Activated T-helper 1 cell treated with anti-CD3 and anti-CD28 coated beads, Interleukin-12 subunit alpha, Interleukin-12 subunit beta, Interleukin-2, Interleukin-4 antibody, amounts not matched to agents 30 ng/mL and 10 ng/mL and 1 ng/mL, durations not matched to agents 14 hours and 24 hours and 36 hours (primary cell): ENCODE measurements at regions of chr11 and their contacts with region 1.

Region 1: DNA sequence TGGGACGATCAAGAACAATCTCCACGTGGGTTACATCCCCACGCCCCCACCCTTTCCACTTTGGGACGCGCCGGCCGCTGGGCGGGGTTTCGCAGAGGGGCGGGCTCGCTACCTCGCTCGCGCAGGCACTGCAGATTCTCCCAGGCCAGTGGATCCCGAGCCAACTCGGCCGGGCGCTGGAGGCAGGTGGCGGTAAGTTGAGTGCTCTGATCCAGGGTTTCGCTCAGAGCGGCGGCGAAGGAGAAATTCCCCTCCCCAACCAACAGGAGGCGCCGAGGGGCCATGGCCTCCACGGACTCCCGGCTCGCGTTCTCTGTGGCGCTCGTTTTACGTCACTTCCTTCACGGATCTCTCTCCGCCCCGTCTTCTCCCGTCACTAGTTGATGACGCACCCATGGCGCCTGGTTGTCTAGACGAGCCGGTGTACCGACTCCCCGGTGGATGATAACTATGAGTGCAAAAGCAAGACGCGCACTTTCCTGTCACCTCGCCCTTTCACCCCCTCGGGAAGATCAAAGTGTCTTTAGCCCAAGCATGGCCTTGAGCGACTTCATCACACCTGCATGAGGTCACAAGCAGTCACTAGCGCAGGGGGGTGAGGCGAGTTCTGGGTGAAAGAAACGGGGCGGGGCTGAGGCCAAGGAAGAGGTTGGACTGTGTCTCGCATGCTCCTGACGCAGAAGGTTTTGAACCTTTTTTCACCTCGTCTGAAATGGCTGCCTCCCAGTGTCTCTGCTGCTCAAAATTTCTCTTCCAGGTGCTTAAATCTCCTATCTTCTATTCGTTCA is at the starts of genes CFAP68 and FDXACB1:
- DNase-seq: peak; percentile 92
- H3K4me3 Mint-ChIP-seq: peak within 1 kb of the TSS; percentile 94
- H3K27ac Mint-ChIP-seq: peak within 1 kb of the TSS; percentile 100
- H3K4me1 Mint-ChIP-seq: peaks cover 26% of the 10 kb centered on the region
- H3K27me3 Mint-ChIP-seq: peaks cover 2% of the 10 kb centered on the region
- total RNA-seq, gene CFAP68: 17.7 and 22.3 TPM in 2 replicates
- total RNA-seq, gene FDXACB1: 7.9 and 9.4 TPM in 2 replicates

Region 2: GRCh38 chr11:111932611-111932950 is 53.5 kb after region 1 on chr11:
- intact Hi-C with region 1: loop called (anchors 1 kb)
- DNase-seq: no peak
- H3K4me3 Mint-ChIP-seq: no peak overlapping the region
- H3K27ac Mint-ChIP-seq: peak overlapping the region; percentile 24
- H3K4me1 Mint-ChIP-seq: peaks cover 34% of the 10 kb centered on the region
- H3K27me3 Mint-ChIP-seq: peaks cover 2% of the 10 kb centered on the region

Region 3: GRCh38 chr11:111982019-111982464 is 103.0 kb after region 1 on chr11:
- intact Hi-C with region 1: loop called (anchors 1 kb)
- DNase-seq: peak; percentile 34
- H3K4me3 Mint-ChIP-seq: no peak overlapping the region
- H3K27ac Mint-ChIP-seq: no peak overlapping the region
- H3K4me1 Mint-ChIP-seq: peaks cover 9% of the 10 kb centered on the region
- H3K27me3 Mint-ChIP-seq: peaks cover 6% of the 10 kb centered on the region

Region 4: DNA sequence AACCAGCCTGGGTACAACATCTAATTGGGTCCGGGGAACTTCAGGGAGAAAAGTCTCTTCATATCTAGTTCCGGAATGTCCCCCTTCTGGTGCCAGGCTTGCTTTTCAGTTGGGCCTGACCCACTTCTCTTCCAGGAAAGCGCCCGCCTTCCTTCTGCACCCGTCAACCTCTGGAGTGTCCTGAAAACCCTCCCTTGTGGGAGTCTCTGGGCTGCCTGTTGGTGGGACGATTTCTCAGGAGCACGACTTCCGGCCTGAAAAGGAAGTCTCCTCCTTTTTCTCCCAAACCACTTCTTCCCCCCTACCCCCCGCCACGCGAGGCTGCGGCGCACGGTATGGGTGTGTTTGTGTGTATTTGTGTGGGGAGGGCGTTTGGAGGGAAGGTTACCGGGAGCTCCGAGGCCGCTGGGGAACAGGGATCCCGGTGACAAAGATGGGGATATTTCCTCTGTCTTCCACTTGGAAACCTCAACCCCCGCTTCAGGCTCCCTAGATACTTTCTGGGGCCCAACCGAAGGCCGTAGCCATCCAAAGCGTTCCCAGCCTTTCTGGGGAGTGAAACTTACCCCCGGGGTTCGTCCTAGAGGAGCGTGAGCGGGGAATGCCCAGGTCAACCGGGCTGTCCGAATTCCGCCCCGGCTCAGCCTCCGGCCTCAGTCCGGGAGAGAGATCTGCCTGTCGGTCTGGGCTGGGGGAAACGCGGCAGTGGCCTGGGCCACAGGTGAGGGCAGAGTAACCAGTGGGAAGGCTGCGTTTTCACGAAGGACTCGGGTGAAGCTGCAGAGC is 195.2 kb after region 1 on chr11 and contains the start of gene NKAPD1:
- intact Hi-C with region 1: loop called (anchors 1 kb)
- DNase-seq: peak; percentile 77
- H3K4me3 Mint-ChIP-seq: peak within 1 kb of the TSS; percentile 94
- H3K27ac Mint-ChIP-seq: peak within 1 kb of the TSS; percentile 95
- H3K4me1 Mint-ChIP-seq: peaks cover 39% of the 10 kb centered on the region
- H3K27me3 Mint-ChIP-seq: no peaks in the 10 kb centered on the region
- total RNA-seq, gene NKAPD1: 29.1 and 33.0 TPM in 2 replicates

Region 5: GRCh38 chr11:112174789-112175598 is 296.0 kb after region 1 on chr11 and contains the start of gene BCO2:
- intact Hi-C with region 1: loop called (anchors 2 kb)
- DNase-seq: peak; percentile 14
- H3K4me3 Mint-ChIP-seq: peak within 1 kb of the TSS; percentile 38
- H3K27ac Mint-ChIP-seq: peak within 1 kb of the TSS; percentile 72
- H3K4me1 Mint-ChIP-seq: peaks cover 13% of the 10 kb centered on the region
- H3K27me3 Mint-ChIP-seq: peaks cover 15% of the 10 kb centered on the region
- total RNA-seq, gene BCO2: 0.49 and 1.6 TPM in 2 replicates

Region 6: GRCh38 chr11:112280268-112281126 is 401.5 kb after region 1 on chr11:
- intact Hi-C with region 1: loop called (anchors 10 kb)
- DNase-seq: peak; percentile 64
- H3K4me3 Mint-ChIP-seq: peak overlapping the region; percentile 85
- H3K27ac Mint-ChIP-seq: peak overlapping the region; percentile 77
- H3K4me1 Mint-ChIP-seq: peaks cover 39% of the 10 kb centered on the region
- H3K27me3 Mint-ChIP-seq: peaks cover 4% of the 10 kb centered on the region